ENCODE measurements at regions of chr17 and their contacts with region 1.

Region 1: DNA sequence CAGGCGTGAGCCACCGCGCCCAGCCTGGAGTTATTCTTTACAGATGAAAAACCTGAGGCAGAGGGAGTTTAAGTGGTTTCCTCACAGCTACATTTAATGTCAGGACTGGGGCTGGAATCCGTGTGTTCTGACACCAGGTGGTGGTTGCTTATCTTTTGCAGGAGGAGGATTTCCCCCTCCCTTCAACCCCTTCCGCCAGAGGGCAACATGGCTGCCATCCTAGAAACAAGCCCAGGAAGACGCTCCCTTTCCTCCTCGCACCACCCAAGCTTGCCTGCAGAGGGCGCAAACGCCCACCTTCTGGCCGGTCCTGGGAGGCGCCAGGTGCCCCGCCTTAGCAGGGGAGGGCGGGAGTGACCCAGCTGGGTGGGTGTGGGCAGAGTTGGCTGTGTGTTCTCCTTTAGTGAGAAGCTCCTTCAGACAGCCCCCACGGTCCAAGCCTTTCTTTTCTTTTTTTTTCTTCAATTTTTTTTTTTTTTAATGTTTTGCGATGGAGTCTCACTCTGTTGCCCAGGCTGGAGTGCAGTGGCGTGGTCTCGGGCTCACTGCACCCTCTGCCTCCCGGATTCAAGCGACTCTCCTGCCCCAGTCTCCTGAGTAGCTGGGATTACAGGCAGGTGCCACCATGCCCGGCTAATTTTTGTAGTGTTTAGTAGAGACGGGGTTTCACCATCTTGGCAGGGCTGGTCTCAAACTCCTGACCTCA is 9.9 kb upstream of the RAP1GAP2 start:
- DNase-seq: peak; percentile 98
- H3K4me3 Mint-ChIP-seq: no peak overlapping the region
- H3K27ac Mint-ChIP-seq: no peak overlapping the region
- H3K4me1 Mint-ChIP-seq: peaks cover 7% of the 10 kb centered on the region
- H3K27me3 Mint-ChIP-seq: peaks cover 8% of the 10 kb centered on the region

Region 2: DNA sequence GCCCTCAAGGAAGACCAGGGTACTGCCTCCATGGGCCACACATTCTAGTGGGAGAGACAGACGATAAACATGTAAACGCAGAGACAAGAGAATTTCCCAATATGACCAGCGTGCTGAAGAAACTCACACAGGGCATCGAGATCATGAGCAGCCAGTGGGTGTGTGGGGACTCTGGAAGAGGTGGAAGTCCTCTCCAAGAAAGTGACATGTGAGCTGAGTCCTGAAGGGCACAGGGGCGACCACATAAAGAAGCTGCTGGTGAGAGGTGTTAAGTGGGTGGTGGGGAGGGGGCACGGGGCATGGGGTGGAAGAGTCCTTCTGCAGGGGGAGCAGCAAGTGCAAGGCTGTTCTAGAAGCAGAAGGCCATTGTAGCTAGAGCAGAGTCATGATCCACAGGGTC is 11.1 kb before region 1 on chr17:
- intact Hi-C with region 1: no loop called
- DNase-seq: no peak
- H3K4me3 Mint-ChIP-seq: no peak overlapping the region
- H3K27ac Mint-ChIP-seq: no peak overlapping the region
- H3K4me1 Mint-ChIP-seq: peaks cover 2% of the 10 kb centered on the region
- H3K27me3 Mint-ChIP-seq: peaks cover 36% of the 10 kb centered on the region

Region 3: GRCh38 chr17:2837147-2837561 is 50.8 kb after region 1 on chr17:
- intact Hi-C with region 1: loop called (anchors 1 kb)
- DNase-seq: peak; percentile 80
- H3K4me3 Mint-ChIP-seq: no peak overlapping the region
- H3K27ac Mint-ChIP-seq: no peak overlapping the region
- H3K4me1 Mint-ChIP-seq: peaks cover 7% of the 10 kb centered on the region
- H3K27me3 Mint-ChIP-seq: peaks cover 6% of the 10 kb centered on the region

Region 4: GRCh38 chr17:2853111-2853721 is 66.9 kb after region 1 on chr17:
- intact Hi-C with region 1: no loop called
- DNase-seq: peak; percentile 83
- H3K4me3 Mint-ChIP-seq: no peak overlapping the region
- H3K27ac Mint-ChIP-seq: no peak overlapping the region
- H3K4me1 Mint-ChIP-seq: peaks cover 14% of the 10 kb centered on the region
- H3K27me3 Mint-ChIP-seq: peaks cover 49% of the 10 kb centered on the region

Region 5: DNA sequence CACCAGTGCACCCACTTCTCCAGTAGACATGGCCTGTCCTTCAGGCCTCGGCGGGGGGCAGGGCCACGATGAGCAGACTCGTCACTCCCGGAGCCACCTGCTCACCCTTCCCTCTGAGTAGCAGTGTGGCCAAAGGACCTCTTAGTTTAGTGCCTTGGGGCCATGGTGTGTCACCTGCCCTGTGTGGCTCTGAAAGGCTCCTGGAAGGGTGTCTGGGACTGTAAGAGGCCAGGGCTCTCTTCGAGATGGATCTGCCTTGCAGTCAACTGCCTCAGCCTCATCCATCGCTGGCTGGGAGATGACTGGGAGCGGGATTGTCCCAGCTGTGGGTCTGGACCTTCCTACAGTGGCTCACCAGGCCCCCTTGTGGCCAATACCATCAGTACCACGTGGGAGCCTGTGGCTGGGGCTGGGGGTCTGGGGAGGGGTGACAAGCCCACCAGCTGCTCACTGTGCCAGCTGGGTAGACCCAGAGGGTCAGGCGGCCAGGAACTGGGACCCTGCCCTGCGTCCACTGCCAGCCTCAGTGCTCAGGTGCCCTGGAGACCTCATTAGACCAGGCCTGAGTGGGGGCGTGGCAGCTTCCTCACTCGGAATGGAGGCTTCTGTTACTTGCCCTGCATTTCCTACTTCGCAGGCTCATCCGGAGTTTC is 143.7 kb after region 1 on chr17:
- intact Hi-C with region 1: loop called (anchors 2 kb)
- DNase-seq: peak; percentile 72
- H3K4me3 Mint-ChIP-seq: no peak overlapping the region
- H3K27ac Mint-ChIP-seq: no peak overlapping the region
- H3K4me1 Mint-ChIP-seq: peaks cover 2% of the 10 kb centered on the region
- H3K27me3 Mint-ChIP-seq: no peaks in the 10 kb centered on the region